Activated CD8-positive, alpha-beta T cell treated with anti-CD3 and anti-CD28 coated beads, Interleukin-2, amount 10 ng/mL, durations not matched to agents 7 days and 5 days (primary cell): ENCODE measurements at regions of chr1 and their contacts with region 1.

Region 1: DNA sequence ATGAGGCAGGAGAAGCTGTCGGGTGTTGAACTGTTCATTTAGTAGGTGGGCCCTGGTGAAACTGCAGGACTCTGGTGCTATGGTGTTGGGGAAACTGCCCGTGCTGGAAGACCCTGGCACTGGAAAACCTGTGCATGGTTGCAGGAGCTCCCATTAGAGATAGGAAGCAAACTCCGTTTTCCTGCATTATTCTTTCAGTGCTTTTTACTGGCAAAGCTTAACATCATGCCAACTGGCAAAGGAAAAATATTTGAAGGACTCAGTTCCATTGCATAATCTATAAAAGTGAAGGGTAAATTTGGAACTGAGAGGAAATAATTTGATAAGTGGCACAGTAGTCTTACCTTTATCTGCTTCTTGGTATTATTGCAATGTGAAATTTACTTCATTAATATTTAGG is 31.7 kb upstream of the MPC2 start:
- DNase-seq: no peak
- ATAC-seq: no peak
- H3K4me3 Mint-ChIP-seq: no peak overlapping the region
- H3K27ac Mint-ChIP-seq: no peak overlapping the region
- H3K4me1 Mint-ChIP-seq: no peaks in the 10 kb centered on the region
- H3K27me3 Mint-ChIP-seq: no peaks in the 10 kb centered on the region

Region 2: DNA sequence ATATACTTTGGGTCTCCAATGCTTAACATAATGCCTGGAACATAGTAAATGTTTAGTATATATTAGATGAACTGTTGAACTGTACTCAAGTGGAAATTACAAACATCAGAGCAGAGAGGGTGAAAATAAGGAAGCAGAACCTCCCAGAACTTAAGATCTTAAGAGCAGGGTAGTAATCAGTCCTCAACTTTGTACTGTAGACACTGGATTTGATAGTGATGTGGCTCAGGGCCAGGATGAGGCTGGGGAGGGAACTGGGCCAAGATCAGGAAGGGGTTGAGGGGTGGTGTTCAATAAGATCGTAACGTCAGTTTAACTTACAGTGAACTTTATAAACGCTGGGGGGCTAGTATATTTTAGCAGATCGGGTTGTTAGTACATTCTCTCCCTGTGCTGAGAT is 231.4 kb before region 1 on chr1:
- CTCF ChIA-PET with region 1: no interaction called
- POLR2A ChIA-PET with region 1: no interaction called
- DNase-seq: no peak
- ATAC-seq: no peak
- H3K4me3 Mint-ChIP-seq: no peak overlapping the region
- H3K27ac Mint-ChIP-seq: no peak overlapping the region
- H3K4me1 Mint-ChIP-seq: no peaks in the 10 kb centered on the region
- H3K27me3 Mint-ChIP-seq: no peaks in the 10 kb centered on the region

Region 3: DNA sequence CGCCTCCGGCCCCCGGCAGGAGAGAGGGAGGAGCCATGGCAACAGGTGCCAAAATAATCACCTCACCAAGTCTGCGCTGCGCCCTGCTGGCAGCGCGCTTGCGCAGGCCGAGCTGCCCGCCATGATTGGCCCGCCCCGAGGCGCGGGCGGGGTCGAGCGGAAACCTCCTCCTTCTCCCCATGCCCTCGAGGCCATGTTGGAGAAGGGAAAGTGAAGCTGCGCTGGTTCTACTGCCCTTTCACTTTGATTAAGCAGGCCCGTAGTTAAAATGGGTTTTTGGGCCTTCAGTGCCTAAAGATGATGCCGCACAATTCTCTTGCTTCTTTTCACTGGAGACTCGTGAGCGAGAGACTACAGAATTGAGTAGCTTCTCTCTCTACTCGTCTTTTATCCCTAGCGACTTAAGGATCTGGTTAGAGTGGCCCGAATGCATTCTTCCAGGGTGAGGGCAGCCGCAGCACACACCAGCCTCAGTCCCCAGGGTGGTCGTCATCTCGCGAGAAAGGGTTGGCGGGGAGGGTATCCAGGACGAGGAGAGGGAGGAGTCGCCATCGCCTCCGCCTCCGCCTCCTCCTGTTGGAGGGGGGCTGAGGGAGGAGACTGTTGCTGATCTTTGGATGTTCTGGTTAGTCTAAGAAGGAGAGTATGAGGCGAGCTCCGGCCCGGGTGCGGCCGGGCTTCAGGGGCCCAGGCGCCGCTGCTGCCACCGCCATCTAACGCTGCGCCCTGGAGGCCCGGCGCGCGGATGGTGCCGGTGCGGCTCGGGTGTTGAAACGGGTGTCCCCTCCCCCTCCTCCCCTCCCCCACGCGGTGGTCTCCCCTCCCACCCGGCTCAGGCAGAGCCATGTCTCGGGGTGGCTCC is 32.3 kb before region 1 on chr1 and contains the start of gene DCAF6:
- CTCF ChIA-PET with region 1: interaction called, 3 read pairs
- POLR2A ChIA-PET with region 1: interaction called, 12 read pairs
- DNase-seq: peak; percentile 98
- ATAC-seq: peak; percentile 82
- H3K4me3 Mint-ChIP-seq: peak within 1 kb of the TSS; percentile 84
- H3K27ac Mint-ChIP-seq: peak within 1 kb of the TSS; percentile 95
- H3K4me1 Mint-ChIP-seq: peaks cover 33% of the 10 kb centered on the region
- H3K27me3 Mint-ChIP-seq: no peaks in the 10 kb centered on the region
- total RNA-seq, gene DCAF6: 22.6 to 25.1 TPM